IMR-90 (cell line): ENCODE measurements at regions of chr2 and their contacts with region 1.

Region 1: DNA sequence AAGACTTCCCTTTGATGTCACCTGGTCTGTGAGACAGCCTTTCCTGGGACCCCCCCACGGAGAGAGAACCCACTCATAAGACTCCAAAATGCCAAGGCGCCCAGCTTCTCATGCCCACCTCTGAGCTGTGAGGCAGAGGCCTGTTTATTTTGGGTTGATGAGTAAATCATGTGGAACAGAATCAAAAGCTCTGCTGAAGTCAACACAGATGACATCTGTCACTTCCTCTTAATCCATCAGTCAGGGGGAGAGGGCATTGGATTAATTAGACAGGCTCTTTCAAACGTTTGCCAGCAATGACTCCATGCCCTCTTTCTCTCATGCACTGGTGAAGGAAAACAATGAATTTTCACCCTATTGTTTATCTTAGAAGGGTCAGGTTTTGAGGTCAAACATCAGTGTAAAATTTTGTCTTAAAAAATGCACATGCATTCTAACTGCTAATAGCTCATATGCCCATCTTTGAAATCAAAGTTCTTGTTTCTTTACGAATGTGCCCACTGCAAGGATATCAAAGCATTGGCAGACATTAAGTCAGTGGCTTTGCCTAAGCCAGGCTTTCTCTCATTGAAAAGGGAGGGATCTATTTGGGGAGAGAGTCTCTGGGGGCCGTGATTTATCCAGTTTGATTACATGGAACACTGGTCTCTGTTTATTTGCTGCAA is 184.1 kb downstream of the ACKR3 start:
- DNase-seq: no peak
- ATAC-seq: no peak
- H3K4me3 ChIP-seq: no peak overlapping the region
- H3K27ac ChIP-seq: no peak overlapping the region
- H3K4me1 ChIP-seq: 0 out of 2 replicates have a peak, but pooled peaks cover 2% of the 10 kb centered on the region
- H3K27me3 ChIP-seq: peaks cover 33% of the 10 kb centered on the region
- CTCF ChIP-seq: no peak
- POLR2A ChIP-seq: no peak
- RAD21 ChIP-seq: no peak

Region 2: GRCh38 chr2:236576087-236576486 is 177.7 kb before region 1 on chr2:
- CTCF ChIA-PET with region 1: no interaction called
- POLR2A ChIA-PET with region 1: no interaction called
- dilution Hi-C with region 1: no loop called
- in situ Hi-C with region 1: no loop called
- intact Hi-C with region 1: no loop called
- DNase-seq: no peak
- ATAC-seq: peak; percentile 67
- H3K4me3 ChIP-seq: no peak overlapping the region
- H3K27ac ChIP-seq: no peak overlapping the region
- H3K4me1 ChIP-seq: no peaks in the 10 kb centered on the region
- H3K27me3 ChIP-seq: peaks cover 15% of the 10 kb centered on the region
- CTCF ChIP-seq: no peak
- POLR2A ChIP-seq: no peak
- RAD21 ChIP-seq: no peak

Region 3: DNA sequence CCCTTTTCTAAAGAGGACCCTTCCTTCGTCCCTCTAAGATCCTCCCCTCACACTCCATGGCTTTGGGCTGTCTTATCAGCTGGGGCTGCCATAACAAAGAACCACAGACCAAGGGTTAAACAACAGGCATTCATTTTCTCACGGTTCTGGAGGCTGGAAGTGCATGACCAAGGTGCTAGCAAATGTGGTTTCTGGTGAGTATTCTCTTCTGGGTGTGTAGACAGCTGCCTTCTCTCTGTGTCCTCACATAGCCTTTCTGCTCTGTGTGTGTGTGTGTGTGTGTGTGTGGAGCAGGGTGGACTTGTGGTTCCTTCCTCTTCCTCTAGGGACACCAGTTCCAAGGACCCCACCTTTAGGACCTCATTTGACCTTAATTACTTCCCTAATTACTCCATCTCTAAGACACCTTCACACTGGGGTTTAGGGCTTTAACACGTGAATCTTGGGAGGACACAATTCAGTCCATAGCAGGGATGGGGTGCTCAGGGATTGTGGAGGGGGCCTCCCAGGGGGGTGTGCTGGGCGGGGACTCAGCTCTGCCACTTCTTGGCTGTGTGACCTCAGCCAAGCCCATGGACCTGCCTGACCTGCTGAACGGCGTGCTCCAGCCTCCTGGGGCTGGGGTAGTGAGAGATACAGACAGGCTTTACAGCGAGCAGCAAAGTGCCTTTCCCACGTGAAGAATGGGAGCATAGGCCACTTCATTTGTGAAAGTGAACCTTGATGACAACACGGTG is 146.1 kb before region 1 on chr2:
- CTCF ChIA-PET with region 1: no interaction called
- POLR2A ChIA-PET with region 1: no interaction called
- dilution Hi-C with region 1: no loop called
- in situ Hi-C with region 1: no loop called
- intact Hi-C with region 1: no loop called
- DNase-seq: peak; percentile 14
- ATAC-seq: no peak
- H3K4me3 ChIP-seq: no peak overlapping the region
- H3K27ac ChIP-seq: no peak overlapping the region
- H3K4me1 ChIP-seq: peaks cover 2% of the 10 kb centered on the region; the same call in 1 of the 2 replicates
- H3K27me3 ChIP-seq: peaks cover 7% of the 10 kb centered on the region
- CTCF ChIP-seq: no peak
- POLR2A ChIP-seq: no peak
- RAD21 ChIP-seq: no peak

Region 4: DNA sequence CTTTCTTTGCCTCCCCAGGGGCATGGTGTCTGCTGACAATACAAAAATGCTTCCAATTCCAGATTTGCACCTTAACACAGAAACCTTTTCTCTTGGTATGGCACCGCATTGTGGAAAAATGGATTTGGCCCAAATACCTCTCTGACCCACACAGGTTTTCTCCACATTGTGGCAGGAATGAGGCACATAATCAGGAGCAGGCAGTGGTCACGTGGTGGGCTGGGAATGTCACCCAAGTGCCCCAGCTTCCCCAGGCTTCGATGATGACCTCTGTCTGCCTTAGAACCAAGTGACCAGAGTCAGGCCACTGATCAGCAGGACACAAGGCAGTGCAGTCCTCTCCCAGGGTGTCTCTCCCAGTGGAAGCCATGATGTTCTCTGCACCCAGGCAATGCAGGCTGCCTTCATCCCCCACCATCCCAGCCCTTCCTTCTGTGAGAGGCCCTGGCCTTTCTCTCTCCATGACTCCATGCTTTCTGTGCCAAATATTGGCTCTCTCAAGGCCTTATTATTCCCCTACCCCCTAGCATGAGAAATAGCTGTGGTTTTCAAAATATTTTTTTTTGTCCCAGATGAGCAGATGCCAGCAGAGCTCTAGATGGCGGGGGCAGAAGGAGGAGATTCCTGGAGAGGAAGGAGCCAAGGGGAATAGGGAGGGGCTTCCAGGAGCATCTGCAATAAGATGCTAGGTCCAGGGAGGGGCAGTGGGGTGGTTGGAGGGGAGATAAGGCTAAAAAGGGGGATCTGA is 14.8 kb after region 1 on chr2:
- CTCF ChIA-PET with region 1: no interaction called
- POLR2A ChIA-PET with region 1: interaction called, 13 read pairs
- dilution Hi-C with region 1: no loop called
- in situ Hi-C with region 1: no loop called
- intact Hi-C with region 1: no loop called
- DNase-seq: peak; percentile 14
- ATAC-seq: no peak
- H3K4me3 ChIP-seq: no peak overlapping the region
- H3K27ac ChIP-seq: no peak overlapping the region
- H3K4me1 ChIP-seq: no peaks in the 10 kb centered on the region
- H3K27me3 ChIP-seq: peaks cover 7% of the 10 kb centered on the region
- CTCF ChIP-seq: no peak
- POLR2A ChIP-seq: no peak
- RAD21 ChIP-seq: no peak

Region 5: DNA sequence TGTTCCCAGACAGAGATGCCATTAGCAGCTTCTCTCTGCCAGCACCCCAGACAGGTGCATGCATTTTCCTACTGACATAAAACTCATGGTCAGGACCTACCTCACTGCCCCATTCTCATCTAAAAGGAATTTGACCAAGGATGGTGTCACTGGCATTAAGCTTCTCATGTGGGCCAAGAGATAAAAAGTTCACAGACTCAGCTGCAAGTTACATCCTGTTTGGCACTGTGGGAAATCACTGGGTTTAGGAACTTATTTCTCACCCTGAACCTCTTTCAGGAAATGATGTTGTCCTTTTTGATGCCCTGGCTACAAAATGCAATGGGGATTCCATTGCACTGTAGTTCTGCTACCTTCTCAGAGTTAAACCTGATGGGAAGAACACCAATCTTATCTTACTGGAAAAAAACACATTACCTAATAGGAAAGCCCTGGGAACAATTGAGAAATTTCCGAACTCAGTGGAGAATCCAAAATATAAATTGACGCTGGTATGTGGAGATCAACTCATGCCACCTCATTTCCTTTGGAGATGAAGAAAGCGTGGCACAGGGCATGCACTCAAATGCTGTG is 79.8 kb after region 1 on chr2:
- CTCF ChIA-PET with region 1: no interaction called
- POLR2A ChIA-PET with region 1: no interaction called
- dilution Hi-C with region 1: no loop called
- in situ Hi-C with region 1: no loop called
- intact Hi-C with region 1: no loop called
- DNase-seq: peak; percentile 1
- ATAC-seq: no peak
- H3K4me3 ChIP-seq: no peak overlapping the region
- H3K27ac ChIP-seq: no peak overlapping the region
- H3K4me1 ChIP-seq: no peaks in the 10 kb centered on the region
- H3K27me3 ChIP-seq: peaks cover 5% of the 10 kb centered on the region; the same call in 1 of the 2 replicates
- CTCF ChIP-seq: no peak
- POLR2A ChIP-seq: no peak
- RAD21 ChIP-seq: no peak

Region 6: GRCh38 chr2:236862961-236863728 is 109.4 kb after region 1 on chr2:
- CTCF ChIA-PET with region 1: no interaction called
- POLR2A ChIA-PET with region 1: no interaction called
- dilution Hi-C with region 1: no loop called
- in situ Hi-C with region 1: no loop called
- intact Hi-C with region 1: no loop called
- DNase-seq: peak; percentile 82
- ATAC-seq: peak; percentile 40
- H3K4me3 ChIP-seq: no peak overlapping the region
- H3K27ac ChIP-seq: peak overlapping the region; percentile 12; the same call in 1 of the 2 replicates
- H3K4me1 ChIP-seq: peaks cover 3% of the 10 kb centered on the region; the same call in 1 of the 2 replicates
- H3K27me3 ChIP-seq: 0 out of 2 replicates have a peak, but pooled peaks cover 2% of the 10 kb centered on the region
- CTCF ChIP-seq: no peak
- POLR2A ChIP-seq: no peak
- RAD21 ChIP-seq: no peak